ENCODE measurements at regions of chr7 and their contacts with region 1.

Region 1: DNA sequence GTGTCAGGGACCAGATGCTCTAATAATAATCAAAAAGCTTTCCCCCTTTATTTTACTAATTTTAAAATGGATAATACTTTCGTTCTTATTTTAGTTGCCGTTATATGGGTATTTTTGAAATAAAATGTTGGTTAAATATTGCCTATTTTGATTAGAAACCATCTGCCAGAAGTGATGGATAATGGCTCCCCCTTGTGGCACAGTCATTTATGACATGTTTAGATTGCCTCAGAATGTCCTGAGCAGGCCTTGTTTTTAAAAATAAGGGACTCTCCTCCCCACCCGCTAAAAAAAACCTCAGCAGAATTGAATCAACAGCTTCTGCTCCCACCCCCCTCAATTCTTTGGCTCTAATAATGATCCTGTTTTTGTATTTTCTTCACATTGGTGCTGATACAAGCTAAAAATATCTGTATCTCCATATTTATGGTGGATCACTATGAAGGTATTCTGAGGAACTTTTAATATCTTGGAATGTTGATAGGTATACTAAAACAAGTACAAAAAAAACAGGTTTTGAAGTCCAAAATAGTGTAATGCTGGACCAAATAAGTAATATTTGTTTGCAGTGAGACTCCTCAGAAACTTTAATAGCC is 38.8 kb downstream of the TMEM60 start:
- DNase-seq: peak in 1 of 2 donors; percentile 78
- H3K4me3 ChIP-seq: no peak overlapping the region
- H3K27ac ChIP-seq: no peak overlapping the region
- H3K4me1 ChIP-seq: no peaks in the 10 kb centered on the region
- H3K27me3 ChIP-seq: no peaks in the 10 kb centered on the region
- CTCF ChIP-seq: peak; percentile 73 to 83 (median 75)

Region 2: DNA sequence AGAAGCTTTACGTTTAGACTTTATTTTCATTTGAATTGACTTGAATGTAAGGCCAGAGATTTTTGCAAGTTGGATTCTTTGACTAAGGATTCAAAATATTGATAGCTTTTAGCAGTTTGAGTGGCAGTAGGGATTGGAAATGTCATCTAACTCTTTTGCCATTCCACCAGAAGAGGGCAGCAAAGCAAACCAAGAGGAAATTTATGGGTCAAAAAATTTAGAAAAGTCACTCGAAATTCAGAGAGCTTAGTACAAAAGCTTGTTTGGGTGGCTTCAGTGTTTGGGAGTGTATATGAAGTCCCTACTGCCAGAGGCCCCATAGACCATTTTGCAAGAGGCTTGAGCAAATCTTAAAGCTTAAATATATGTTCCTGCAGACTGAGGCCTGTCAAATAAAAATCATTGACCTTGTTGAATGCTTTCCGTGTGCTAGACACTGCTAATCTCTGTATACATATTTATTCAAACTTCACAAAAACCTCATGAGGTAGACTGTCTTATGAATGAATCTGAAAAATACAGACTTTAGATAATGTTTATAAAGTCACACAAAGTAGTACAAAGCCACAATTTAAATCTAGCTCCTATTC is 107.7 kb before region 1 on chr7:
- intact Hi-C with region 1: loop called (anchors 1 kb)
- DNase-seq: no peak
- H3K4me3 ChIP-seq: no peak overlapping the region
- H3K27ac ChIP-seq: no peak overlapping the region
- H3K4me1 ChIP-seq: no peaks in the 10 kb centered on the region
- H3K27me3 ChIP-seq: no peaks in the 10 kb centered on the region
- CTCF ChIP-seq: peak; percentile 38 to 78 (median 55)

Region 3: DNA sequence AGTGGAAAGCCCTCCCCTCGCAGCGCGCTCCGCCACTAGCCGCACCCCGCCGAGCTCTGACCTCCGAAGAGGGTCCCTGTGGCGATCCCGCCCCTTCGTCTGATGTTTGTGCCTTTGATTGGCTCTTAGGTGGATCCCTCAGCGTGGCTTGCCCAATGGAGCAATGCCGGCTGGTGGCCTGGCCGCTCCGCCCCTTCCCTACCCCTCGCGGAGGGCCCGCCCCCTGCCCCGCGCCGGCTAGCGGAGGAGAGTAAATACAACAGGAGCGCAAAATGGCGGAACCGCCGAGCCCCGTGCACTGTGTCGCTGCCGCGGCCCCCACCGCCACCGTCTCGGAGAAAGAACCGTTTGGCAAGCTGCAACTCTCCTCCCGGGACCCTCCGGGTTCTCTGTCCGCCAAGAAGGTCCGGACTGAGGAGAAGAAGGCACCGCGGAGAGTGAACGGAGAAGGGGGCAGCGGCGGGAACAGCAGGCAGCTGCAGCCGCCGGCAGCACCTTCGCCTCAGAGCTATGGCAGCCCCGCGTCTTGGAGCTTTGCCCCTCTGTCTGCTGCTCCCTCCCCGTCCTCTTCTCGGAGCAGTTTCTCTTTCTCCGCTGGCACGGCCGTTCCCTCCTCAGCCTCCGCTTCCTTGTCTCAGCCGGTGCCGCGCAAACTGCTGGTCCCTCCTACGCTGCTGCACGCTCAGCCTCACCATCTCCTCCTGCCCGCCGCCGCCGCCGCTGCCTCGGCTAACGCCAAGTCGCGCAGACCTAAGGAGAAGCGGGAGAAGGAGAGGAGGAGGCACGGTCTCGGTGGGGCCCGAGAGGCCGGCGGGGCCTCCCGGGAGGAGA is 63.0 kb before region 1 on chr7 and contains the start of gene RSBN1L:
- intact Hi-C with region 1: loop called (anchors 5 kb)
- DNase-seq: peak; percentile 97 to 99
- H3K4me3 ChIP-seq: peak within 1 kb of the TSS; percentile 95 to 98
- H3K27ac ChIP-seq: peak within 1 kb of the TSS; percentile 93 to 98
- H3K4me1 ChIP-seq: peaks cover 0 to 16% of the 10 kb centered on the region in 2 donors
- H3K27me3 ChIP-seq: no peaks in the 10 kb centered on the region
- CTCF ChIP-seq: peak; percentile 38 to 49 (median 44)
- total RNA-seq, gene RSBN1L: 12.8 TPM

Region 4: GRCh38 chr7:77812290-77812685 is 52.9 kb after region 1 on chr7:
- intact Hi-C with region 1: no loop called
- DNase-seq: no peak
- H3K4me3 ChIP-seq: no peak overlapping the region
- H3K27ac ChIP-seq: peak overlapping the region in 1 of 2 donors; percentile 40
- H3K4me1 ChIP-seq: peaks cover 0 to 3% of the 10 kb centered on the region in 2 donors
- H3K27me3 ChIP-seq: no peaks in the 10 kb centered on the region
- CTCF ChIP-seq: no peak